ENCODE measurements at regions of chr3 and their contacts with region 1.

Region 1: DNA sequence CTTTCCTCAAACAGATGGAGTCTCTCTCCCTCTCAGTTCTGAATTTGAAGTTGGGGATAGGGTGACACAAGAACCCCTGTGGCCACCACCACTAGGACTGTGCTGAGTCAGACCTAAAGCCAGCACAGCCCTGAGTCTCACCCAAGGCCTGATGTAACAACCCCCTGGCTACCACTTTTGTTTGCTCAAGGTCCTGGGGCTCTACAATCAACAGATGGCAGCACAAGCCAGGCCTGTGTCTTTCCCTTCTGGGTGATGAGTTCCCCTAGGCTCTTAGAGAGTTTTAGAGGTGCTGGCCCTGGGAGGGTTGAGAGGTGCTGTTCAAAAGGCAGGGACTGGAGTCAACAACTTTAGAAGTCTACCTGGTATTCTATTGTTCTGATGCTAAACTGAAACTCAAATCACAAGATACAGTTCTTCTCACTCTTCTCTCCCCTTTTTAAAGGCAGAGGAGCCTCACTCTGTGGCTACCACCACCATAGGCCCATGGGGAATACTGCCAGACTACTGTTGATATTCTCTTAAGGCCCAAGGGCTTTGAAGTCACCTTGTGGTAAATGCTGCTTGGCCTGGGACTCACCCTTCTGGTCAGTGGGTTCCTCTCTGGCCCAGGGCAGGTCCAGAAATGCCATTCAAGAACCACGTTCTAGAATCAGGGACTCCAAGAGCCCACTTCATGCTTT is 6.5 kb downstream of the OR5K4 start:
- DNase-seq: peak; percentile 48
- ATAC-seq: peak; percentile 95
- H3K4me3 ChIP-seq: no peak overlapping the region; the same call in 1 of the 2 replicates
- H3K27ac ChIP-seq: no peak overlapping the region
- H3K4me1 ChIP-seq: peaks cover 5% of the 10 kb centered on the region; the same call in 1 of the 2 replicates
- H3K27me3 ChIP-seq: no peaks in the 10 kb centered on the region
- CTCF ChIP-seq: peak; percentile 31 to 56 (median 44)
- EP300 ChIP-seq: no peak
- POLR2A ChIP-seq: no peak
- RAD21 ChIP-seq: peak; percentile 61

Region 2: DNA sequence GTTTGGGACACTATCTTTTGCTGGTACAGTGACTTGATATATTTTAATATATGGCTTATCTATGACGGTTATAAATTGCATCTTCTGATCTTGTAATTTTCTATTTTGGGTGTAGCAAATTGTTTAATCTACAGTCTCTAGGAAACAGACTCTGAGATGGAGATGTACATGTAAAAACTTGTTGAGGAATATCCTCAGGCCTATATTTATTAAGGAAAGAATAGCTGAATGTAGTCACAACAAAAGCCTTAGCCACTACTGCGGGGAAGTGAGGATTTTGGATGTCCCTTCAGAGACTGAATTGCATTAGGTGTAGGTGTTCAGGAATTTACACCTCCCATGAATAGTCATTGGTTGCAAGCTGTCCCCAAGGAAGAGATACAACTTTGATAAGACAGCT is 16.5 kb after region 1 on chr3:
- CTCF ChIA-PET with region 1: no interaction called
- POLR2A ChIA-PET with region 1: no interaction called
- RAD21 ChIA-PET with region 1: no interaction called
- SMC1A ChIA-PET with region 1: no interaction called
- in situ Hi-C with region 1: no loop called
- intact Hi-C with region 1: no loop called
- DNase-seq: no peak
- ATAC-seq: no peak
- H3K4me3 ChIP-seq: no peak overlapping the region
- H3K27ac ChIP-seq: no peak overlapping the region
- H3K4me1 ChIP-seq: no peaks in the 10 kb centered on the region
- H3K27me3 ChIP-seq: no peaks in the 10 kb centered on the region
- CTCF ChIP-seq: no peak
- EP300 ChIP-seq: no peak
- POLR2A ChIP-seq: no peak
- RAD21 ChIP-seq: no peak

Region 3: GRCh38 chr3:98522244-98523090 is 162.3 kb after region 1 on chr3 and contains the start of gene CLDND1:
- CTCF ChIA-PET with region 1: no interaction called
- POLR2A ChIA-PET with region 1: no interaction called
- RAD21 ChIA-PET with region 1: no interaction called
- SMC1A ChIA-PET with region 1: no interaction called
- in situ Hi-C with region 1: no loop called
- intact Hi-C with region 1: loop called (anchors 2 kb)
- DNase-seq: peak; percentile 88
- ATAC-seq: peak; percentile 86
- H3K4me3 ChIP-seq: peak within 1 kb of the TSS; percentile 82
- H3K27ac ChIP-seq: peak within 1 kb of the TSS; percentile 85
- H3K4me1 ChIP-seq: peaks cover 13% of the 10 kb centered on the region; the same call in 1 of the 2 replicates
- H3K27me3 ChIP-seq: no peaks in the 10 kb centered on the region
- CTCF ChIP-seq: no peak
- EP300 ChIP-seq: no peak
- POLR2A ChIP-seq: peak; percentile 94
- RAD21 ChIP-seq: no peak
- polyA plus RNA-seq, gene CLDND1: 150 to 163 TPM

Region 4: GRCh38 chr3:98531622-98532274 is 171.6 kb after region 1 on chr3 and contains the start of gene GPR15:
- CTCF ChIA-PET with region 1: no interaction called
- POLR2A ChIA-PET with region 1: no interaction called
- RAD21 ChIA-PET with region 1: no interaction called
- SMC1A ChIA-PET with region 1: no interaction called
- in situ Hi-C with region 1: no loop called
- intact Hi-C with region 1: loop called (anchors 2 kb)
- DNase-seq: no peak
- ATAC-seq: peak; percentile 44
- H3K4me3 ChIP-seq: peak within 1 kb of the TSS; percentile 81
- H3K27ac ChIP-seq: peak within 1 kb of the TSS; percentile 97
- H3K4me1 ChIP-seq: peaks cover 3% of the 10 kb centered on the region; the same call in 1 of the 2 replicates
- H3K27me3 ChIP-seq: no peaks in the 10 kb centered on the region
- CTCF ChIP-seq: no peak
- EP300 ChIP-seq: no peak; a peak in 1 of 4 replicates
- POLR2A ChIP-seq: no peak
- RAD21 ChIP-seq: no peak
- polyA plus RNA-seq, gene GPR15: 70.7 to 145 TPM

Region 5: GRCh38 chr3:98588065-98588464 is 227.9 kb after region 1 on chr3:
- CTCF ChIA-PET with region 1: interaction called, 3 read pairs
- POLR2A ChIA-PET with region 1: no interaction called
- RAD21 ChIA-PET with region 1: no interaction called
- SMC1A ChIA-PET with region 1: interaction called, 3 read pairs
- in situ Hi-C with region 1: no loop called
- intact Hi-C with region 1: loop called (anchors 2 kb)
- DNase-seq: no peak
- ATAC-seq: no peak
- H3K4me3 ChIP-seq: no peak overlapping the region
- H3K27ac ChIP-seq: no peak overlapping the region
- H3K4me1 ChIP-seq: no peaks in the 10 kb centered on the region
- H3K27me3 ChIP-seq: no peaks in the 10 kb centered on the region
- CTCF ChIP-seq: peak in 1 of 3 experiments; percentile 18; a peak in 2 of 6 replicates
- EP300 ChIP-seq: no peak
- POLR2A ChIP-seq: no peak
- RAD21 ChIP-seq: no peak